ENCODE measurements at regions of chr1 and their contacts with region 1.

Region 1: DNA sequence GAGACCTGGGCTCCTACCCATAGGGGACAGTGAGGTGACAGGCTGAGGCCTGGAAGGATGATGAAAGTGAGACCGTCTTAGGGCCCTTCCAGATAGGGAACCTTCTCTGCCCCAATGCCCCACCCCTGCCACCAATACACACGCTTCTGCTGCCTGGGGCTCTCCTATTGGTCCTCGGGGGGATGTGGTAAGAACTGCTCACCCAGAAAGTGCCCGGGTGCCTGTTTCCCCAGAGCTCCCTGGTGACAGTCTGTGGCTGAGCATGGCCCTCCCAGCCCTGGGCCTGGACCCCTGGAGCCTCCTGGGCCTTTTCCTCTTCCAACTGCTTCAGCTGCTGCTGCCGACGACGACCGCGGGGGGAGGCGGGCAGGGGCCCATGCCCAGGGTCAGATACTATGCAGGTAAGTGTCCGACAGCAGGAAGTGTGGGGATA is 948 bp downstream of the SEMA4A start:
- DNase-seq: no peak
- H3K4me3 ChIP-seq: no peak overlapping the region
- H3K27ac ChIP-seq: no peak overlapping the region
- H3K4me1 ChIP-seq: peaks cover 20% of the 10 kb centered on the region
- H3K27me3 ChIP-seq: no peaks in the 10 kb centered on the region
- CTCF ChIP-seq: no peak

Region 2: DNA sequence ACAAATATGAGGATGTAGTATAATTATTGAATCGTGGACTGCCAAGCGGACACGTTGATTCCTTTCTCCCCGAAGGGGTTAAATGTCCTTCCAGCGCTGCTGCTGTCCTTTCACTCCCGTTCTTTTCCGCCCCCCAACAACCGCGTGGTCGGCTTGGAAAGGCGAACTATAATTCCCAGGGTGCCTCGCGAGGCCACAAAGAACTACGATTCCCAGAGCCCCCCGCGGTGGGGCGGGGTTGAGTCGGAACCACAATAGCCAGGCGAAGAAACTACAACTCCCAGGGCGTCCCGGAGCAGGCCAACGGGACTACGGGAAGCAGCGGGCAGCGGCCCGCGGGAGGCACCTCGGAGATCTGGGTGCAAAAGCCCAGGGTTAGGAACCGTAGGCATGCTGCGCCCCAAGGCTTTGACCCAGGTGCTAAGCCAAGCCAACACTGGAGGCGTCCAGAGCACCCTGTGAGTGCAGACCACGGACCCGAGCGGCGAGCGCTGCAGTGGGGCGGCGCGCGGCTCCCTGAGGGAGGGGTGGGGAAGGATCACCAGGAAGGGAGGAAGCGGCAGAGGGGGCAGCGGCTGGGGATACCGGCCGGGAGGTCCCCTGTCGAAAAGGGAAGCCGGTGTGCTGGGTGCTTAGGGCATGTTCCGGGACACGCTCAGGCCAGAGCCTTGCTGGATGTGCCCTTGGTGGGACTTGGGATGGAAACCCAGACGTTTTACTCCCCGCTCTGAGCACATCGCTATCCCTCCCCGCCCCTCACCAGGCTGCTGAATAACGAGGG is 99.6 kb before region 1 on chr1 and contains the start of gene LAMTOR2:
- CTCF ChIA-PET with region 1: no interaction called
- dilution Hi-C with region 1: no loop called
- in situ Hi-C with region 1: no loop called
- intact Hi-C with region 1: no loop called
- DNase-seq: peak; percentile 96
- H3K4me3 ChIP-seq: peak within 1 kb of the TSS; percentile 94 to 98 (median 98)
- H3K27ac ChIP-seq: peak within 1 kb of the TSS; percentile 73
- H3K4me1 ChIP-seq: peaks cover 6% of the 10 kb centered on the region
- H3K27me3 ChIP-seq: no peaks in the 10 kb centered on the region
- CTCF ChIP-seq: no peak
- total RNA-seq, gene LAMTOR2: 43.7 to 71.3 TPM

Region 3: GRCh38 chr1:156198831-156199349 is 44.6 kb after region 1 on chr1:
- CTCF ChIA-PET with region 1: no interaction called
- dilution Hi-C with region 1: loop called (anchors 5 kb)
- in situ Hi-C with region 1: no loop called
- intact Hi-C with region 1: loop called (anchors 5 kb)
- DNase-seq: no peak
- H3K4me3 ChIP-seq: no peak overlapping the region
- H3K27ac ChIP-seq: no peak overlapping the region
- H3K4me1 ChIP-seq: peaks cover 5% of the 10 kb centered on the region
- H3K27me3 ChIP-seq: no peaks in the 10 kb centered on the region
- CTCF ChIP-seq: no peak

Measured in mammary epithelial cell (primary cell).